Brain microvascular endothelial cell (primary cell): ENCODE measurements at regions of chr1 and their contacts with region 1.

Region 1: DNA sequence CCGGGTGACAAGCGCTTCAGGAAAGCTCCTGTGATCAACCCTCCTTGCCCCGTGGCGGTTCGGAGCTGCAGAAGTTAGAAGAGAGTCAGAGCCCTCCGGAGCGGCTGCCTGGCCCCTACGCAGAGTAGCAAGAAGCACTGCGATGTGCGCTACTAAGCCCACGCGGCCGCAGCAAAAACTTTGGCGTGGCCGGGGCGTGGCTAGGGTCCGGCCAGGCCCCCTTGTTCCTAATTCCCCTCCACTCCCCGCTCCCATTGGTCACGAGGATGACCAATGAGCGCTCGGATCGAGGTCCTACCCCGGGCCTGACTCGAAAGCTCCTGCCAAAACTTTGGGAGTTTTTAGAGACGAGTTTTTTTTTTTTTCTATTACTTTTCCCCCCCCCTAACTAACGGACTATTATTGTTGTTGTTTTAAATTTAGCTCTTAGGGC is at the start of gene HLX:
- DNase-seq: peak; percentile 65
- H3K4me3 ChIP-seq: peak within 1 kb of the TSS; percentile 65
- H3K27ac ChIP-seq: peak within 1 kb of the TSS; percentile 1
- H3K27me3 ChIP-seq: peaks cover 7% of the 10 kb centered on the region
- CTCF ChIP-seq: no peak

Region 2: GRCh38 chr1:221435504-221435904 is 556.4 kb after region 1 on chr1:
- in situ Hi-C with region 1: loop called (anchors 25 kb)
- DNase-seq: peak; percentile 45
- H3K4me3 ChIP-seq: no peak overlapping the region
- H3K27ac ChIP-seq: no peak overlapping the region
- H3K27me3 ChIP-seq: no peaks in the 10 kb centered on the region
- CTCF ChIP-seq: peak; percentile 80